ENCODE measurements at regions of chr10 and their contacts with region 1.

Region 1: GRCh38 chr10:97210543-97210961 is 24.8 kb upstream of the SLIT1 start:
- DNase-seq: peak; percentile 72 to 89
- H3K4me3 ChIP-seq: no peak overlapping the region
- H3K27ac ChIP-seq: no peak overlapping the region
- H3K4me1 ChIP-seq: no peaks in the 10 kb centered on the region
- H3K27me3 ChIP-seq: peaks cover 0 to 20% (median 0%) of the 10 kb centered on the region in 3 donors
- CTCF ChIP-seq: peak in 6 of 7 experiments; percentile 49 to 97 (median 88)
- EP300 ChIP-seq: no peak
- POLR2A ChIP-seq: no peak

Region 2: DNA sequence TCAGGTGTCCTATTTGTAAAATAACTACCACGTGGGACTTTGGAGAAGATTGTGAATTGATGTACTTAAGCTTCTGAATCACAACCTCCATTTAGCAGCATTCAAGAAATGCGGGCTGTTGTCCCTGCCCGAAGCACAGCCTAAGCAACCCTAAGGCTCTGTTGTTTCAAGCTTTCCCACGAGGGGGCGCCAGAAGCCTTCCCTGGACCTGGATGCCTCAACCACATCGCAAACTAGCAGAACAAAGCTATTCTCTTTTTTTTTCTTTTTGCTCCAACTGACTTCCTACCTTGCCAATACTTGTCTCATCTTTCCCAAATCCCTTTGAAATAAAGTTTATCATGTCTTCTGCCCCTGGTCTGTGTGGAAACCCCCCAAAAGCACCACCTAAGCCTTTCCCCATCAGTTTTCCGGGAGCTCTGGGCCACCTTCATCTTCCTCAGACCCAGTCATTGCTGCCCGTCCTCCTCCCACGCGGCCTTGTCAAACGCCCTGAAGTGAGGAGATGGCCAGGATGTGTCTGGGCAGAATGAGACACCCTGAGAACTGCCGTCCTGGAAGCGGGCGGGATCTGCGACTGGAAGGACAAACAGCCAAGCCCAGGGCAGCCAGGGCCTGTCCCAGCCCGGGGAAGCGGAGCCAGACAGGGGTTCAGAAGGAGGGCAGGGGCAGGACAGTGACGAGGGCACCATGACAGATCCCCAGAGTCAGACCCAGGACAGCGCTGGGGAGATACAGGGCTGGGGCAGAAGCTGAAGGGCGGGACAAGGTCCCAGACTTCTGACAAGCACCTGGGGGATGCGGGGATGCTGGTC is 137.5 kb before region 1 on chr10:
- intact Hi-C with region 1: loop called (anchors 5 kb)
- DNase-seq: peak; percentile 85 to 92
- H3K4me3 ChIP-seq: no peak overlapping the region
- H3K27ac ChIP-seq: no peak overlapping the region
- H3K4me1 ChIP-seq: no peaks in the 10 kb centered on the region
- H3K27me3 ChIP-seq: peaks cover 0 to 78% (median 8%) of the 10 kb centered on the region in 3 donors
- CTCF ChIP-seq: peak in 5 of 7 experiments; percentile 64 to 91 (median 82)
- EP300 ChIP-seq: no peak
- POLR2A ChIP-seq: no peak

Measured in stomach (tissue), 19 donors.